Activated T-helper 1 cell treated with anti-CD3 and anti-CD28 coated beads, Interleukin-12 subunit alpha, Interleukin-12 subunit beta, Interleukin-2, Interleukin-4 antibody, amounts not matched to agents 30 ng/mL and 10 ng/mL and 1 ng/mL, durations not matched to agents 14 hours and 24 hours and 36 hours (primary cell): ENCODE measurements at regions of chr20 and their contacts with region 1.

Region 1: GRCh38 chr20:543369-544152 is at the start of gene CSNK2A1:
- DNase-seq: peak; percentile 94
- H3K4me3 Mint-ChIP-seq: peak within 1 kb of the TSS; percentile 91
- H3K27ac Mint-ChIP-seq: peak within 1 kb of the TSS; percentile 91
- H3K4me1 Mint-ChIP-seq: peaks cover 47% of the 10 kb centered on the region
- H3K27me3 Mint-ChIP-seq: peaks cover 3% of the 10 kb centered on the region
- total RNA-seq, gene CSNK2A1: 181 and 185 TPM in 2 replicates

Region 2: DNA sequence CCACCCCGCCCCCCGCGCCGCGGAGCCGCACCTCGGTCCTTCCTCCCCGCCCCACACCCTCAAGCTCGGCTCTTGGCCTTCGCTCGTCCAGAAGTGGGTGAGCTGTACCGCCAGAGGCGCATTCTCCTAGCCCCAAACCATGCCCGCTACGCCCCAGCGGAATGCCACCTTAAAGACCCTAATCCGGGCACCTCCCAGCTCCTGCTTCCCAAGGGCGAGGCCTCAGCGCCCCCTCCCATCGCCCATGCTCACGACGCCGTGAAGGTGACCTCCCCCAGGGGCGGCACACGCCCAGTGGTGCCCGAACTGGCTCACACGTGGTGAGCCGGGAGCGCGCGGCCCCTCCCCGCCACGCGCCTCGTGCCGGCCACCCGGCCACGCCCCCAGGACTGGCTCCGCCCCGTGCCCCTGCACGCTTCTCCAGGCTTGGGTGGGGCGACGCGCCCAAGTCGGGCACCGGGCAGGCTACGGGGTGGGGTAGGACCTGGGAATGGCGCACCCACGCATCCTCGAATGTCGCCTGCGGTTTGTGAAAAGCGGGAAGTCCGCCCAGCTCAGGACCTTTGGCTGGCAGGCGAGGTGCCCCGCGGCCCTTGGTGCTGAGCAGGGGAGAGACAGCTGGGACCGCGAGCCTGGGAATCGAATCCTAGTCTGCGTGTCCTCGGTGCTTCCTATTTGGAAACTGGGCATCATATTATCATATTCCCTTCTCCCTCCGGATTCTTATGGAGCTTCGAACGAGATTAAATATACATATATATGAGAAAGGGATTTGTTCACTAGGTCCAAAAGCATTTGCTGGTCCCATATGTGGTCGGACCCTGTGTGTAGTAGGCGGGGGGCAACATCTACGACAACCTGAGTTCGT is 219.2 kb before region 1 on chr20:
- intact Hi-C with region 1: loop called (anchors 2 kb)
- DNase-seq: peak; percentile 84
- H3K4me3 Mint-ChIP-seq: peak overlapping the region; percentile 91
- H3K27ac Mint-ChIP-seq: peak overlapping the region; percentile 84
- H3K4me1 Mint-ChIP-seq: peaks cover 25% of the 10 kb centered on the region
- H3K27me3 Mint-ChIP-seq: peaks cover 6% of the 10 kb centered on the region

Region 3: DNA sequence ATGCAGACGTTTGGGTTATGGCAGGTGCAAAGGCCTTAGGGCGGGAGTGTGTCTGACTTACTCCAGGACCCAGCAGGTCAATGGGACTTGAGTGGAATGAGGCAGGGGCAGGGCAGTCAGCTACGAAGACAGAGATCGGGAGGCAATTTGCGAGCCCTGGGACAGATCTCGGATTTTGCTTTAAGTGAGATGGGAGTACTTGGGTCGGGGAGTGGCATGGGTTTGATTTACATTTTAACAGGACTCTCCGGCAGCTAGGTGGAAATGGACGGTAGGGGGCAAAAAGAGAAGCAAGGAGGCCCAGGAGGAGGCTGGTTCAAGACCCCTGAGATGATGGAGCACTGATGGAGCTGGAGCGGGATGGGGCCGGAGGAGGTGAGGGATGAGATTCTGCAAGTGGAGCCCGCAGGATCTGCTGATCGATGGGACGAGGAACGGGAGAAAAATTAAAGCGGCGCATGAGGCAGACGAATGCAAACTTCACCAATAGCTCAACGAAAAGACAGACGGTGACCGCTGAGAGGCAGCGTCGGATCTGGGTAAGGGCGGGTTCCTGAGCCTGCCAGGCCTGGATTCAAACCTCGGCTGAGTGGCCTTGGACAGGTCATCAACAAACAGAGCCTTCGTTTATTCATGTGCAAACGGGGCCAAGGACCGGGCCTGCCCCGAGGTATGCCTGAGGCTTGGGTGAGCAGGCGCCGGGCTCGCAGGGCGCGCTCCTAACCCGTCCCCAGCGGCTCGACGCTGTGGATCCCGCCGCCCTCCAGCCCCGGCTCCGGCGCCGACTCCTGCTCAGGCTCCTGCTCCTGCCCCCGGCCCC is 136.2 kb before region 1 on chr20:
- intact Hi-C with region 1: loop called (anchors 1 kb)
- DNase-seq: peak; percentile 59
- H3K4me3 Mint-ChIP-seq: peak overlapping the region; percentile 86
- H3K27ac Mint-ChIP-seq: peak overlapping the region; percentile 95
- H3K4me1 Mint-ChIP-seq: peaks cover 47% of the 10 kb centered on the region
- H3K27me3 Mint-ChIP-seq: no peaks in the 10 kb centered on the region

Region 4: GRCh38 chr20:478949-479429 is 64.6 kb before region 1 on chr20:
- intact Hi-C with region 1: loop called (anchors 1 kb)
- DNase-seq: peak; percentile 25
- H3K4me3 Mint-ChIP-seq: no peak overlapping the region
- H3K27ac Mint-ChIP-seq: peak overlapping the region; percentile 69
- H3K4me1 Mint-ChIP-seq: peaks cover 33% of the 10 kb centered on the region
- H3K27me3 Mint-ChIP-seq: no peaks in the 10 kb centered on the region

Region 5: GRCh38 chr20:750801-751200 is 207.2 kb after region 1 on chr20:
- intact Hi-C with region 1: no loop called
- DNase-seq: no peak
- H3K4me3 Mint-ChIP-seq: no peak overlapping the region
- H3K27ac Mint-ChIP-seq: no peak overlapping the region
- H3K4me1 Mint-ChIP-seq: no peaks in the 10 kb centered on the region
- H3K27me3 Mint-ChIP-seq: peaks cover 1% of the 10 kb centered on the region

Region 6: DNA sequence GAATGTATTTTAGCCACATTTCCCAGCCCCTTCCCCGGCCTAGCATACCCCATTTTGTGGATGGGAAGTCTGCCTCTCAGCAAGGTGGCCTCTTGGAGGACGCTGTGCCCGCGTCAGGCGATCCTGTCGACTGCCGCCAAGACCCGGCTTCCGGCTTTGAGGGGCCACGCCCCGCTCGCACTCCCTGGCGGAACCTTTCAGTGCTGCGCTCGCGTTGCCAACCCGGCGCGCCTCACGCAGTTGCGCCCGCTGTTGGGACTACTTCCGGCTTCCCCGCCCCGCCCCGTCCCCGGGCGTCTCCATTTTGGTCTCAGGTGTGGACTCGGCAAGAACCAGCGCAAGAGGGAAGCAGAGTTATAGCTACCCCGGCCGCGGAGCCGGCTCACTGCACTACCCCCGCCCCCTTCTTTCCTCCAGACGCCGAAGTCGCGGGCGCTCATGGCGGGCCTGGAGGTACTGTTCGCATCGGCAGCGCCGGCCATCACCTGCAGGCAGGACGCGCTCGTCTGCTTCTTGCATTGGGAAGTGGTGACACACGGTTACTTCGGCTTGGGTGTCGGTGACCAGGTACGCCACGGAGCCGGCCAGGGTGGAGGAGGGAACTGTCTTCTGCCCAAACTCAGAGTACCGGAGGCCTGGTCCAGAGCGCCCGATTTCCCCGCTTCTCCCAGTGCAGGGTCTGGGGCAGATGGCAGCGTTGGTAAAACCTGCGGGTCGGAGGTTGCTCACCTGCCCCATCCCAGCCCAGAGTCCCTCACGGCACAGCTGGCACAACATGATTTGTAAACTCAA is 575.0 kb after region 1 on chr20 and contains the start of gene PSMF1:
- intact Hi-C with region 1: loop called (anchors 1 kb)
- DNase-seq: peak; percentile 95
- H3K4me3 Mint-ChIP-seq: peak within 1 kb of the TSS; percentile 91
- H3K27ac Mint-ChIP-seq: peak within 1 kb of the TSS; percentile 81
- H3K4me1 Mint-ChIP-seq: peaks cover 56% of the 10 kb centered on the region
- H3K27me3 Mint-ChIP-seq: no peaks in the 10 kb centered on the region
- total RNA-seq, gene PSMF1: 185 and 189 TPM in 2 replicates